PC-3 (cell line): ENCODE measurements at regions of chr1 and their contacts with region 1.

Region 1: GRCh38 chr1:115976062-115976920 is at the start of gene SLC22A15:
- DNase-seq: peak; percentile 64
- ATAC-seq: peak; percentile 73
- H3K4me3 ChIP-seq: peak within 1 kb of the TSS; percentile 75
- H3K27ac ChIP-seq: peak within 1 kb of the TSS; percentile 25
- H3K4me1 ChIP-seq: peaks cover 17% of the 10 kb centered on the region
- H3K27me3 ChIP-seq: no peaks in the 10 kb centered on the region
- CTCF ChIP-seq: no peak
- total RNA-seq, gene SLC22A15: 2.2 TPM in 2 replicates

Region 2: DNA sequence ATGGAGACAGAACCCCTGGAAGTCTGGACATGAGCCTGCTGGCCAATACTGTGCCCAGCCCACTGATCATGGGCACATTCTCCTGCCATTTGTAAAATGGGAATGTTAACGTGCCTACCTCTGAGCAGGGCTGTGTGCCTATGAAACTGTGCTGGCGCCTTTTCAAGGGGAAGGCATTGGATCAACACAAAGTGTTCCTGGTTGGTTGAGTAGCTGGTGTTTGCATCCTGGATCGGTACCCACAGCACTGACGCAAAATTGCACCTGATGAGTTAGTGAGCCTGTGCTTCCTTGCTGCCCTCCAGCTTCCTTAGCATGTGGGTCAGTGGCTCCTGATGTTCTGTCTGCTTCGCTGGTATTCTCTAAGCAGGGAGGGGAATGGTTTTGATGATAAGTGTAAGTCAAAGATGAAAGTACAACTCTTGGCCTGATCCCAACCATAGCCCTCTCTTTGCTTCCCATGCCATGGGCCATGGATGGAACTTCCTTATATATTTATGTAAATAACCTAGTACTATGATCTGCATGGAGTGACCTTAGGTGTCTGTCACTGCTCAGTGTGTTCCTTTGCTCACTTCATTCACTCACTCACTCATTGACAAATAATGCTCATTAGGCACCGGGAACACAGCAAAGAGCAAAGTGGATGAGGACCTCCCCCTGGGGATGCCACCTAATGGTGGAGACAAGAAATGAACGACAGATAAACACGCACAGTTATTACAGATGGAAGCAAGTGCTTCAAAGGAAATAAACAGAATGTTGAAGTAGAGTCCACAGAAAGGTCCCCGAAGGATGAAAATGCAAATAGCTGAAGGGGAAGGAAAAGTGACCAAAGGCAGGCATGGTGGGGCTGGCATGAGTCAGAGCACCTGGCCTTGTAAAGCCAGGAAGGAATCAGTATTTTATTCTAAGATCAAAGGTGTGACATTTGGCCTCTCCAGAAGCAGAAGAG is 157.7 kb after region 1 on chr1:
- CTCF ChIA-PET with region 1: no interaction called
- POLR2A ChIA-PET with region 1: no interaction called
- intact Hi-C with region 1: loop called (anchors 5 kb)
- DNase-seq: peak; percentile 43
- ATAC-seq: peak; percentile 19
- H3K4me3 ChIP-seq: no peak overlapping the region
- H3K27ac ChIP-seq: no peak overlapping the region
- H3K4me1 ChIP-seq: peaks cover 11% of the 10 kb centered on the region; the same call in 1 of the 2 replicates
- H3K27me3 ChIP-seq: no peaks in the 10 kb centered on the region
- CTCF ChIP-seq: peak; percentile 69